Activated CD4-positive, alpha-beta T cell treated with anti-CD3 and anti-CD28 coated beads, Interleukin-2, amount 10 ng/mL, durations not matched to agents 24 days and 14 days (primary cell): ENCODE measurements at regions of chr9 and their contacts with region 1.

Region 1: DNA sequence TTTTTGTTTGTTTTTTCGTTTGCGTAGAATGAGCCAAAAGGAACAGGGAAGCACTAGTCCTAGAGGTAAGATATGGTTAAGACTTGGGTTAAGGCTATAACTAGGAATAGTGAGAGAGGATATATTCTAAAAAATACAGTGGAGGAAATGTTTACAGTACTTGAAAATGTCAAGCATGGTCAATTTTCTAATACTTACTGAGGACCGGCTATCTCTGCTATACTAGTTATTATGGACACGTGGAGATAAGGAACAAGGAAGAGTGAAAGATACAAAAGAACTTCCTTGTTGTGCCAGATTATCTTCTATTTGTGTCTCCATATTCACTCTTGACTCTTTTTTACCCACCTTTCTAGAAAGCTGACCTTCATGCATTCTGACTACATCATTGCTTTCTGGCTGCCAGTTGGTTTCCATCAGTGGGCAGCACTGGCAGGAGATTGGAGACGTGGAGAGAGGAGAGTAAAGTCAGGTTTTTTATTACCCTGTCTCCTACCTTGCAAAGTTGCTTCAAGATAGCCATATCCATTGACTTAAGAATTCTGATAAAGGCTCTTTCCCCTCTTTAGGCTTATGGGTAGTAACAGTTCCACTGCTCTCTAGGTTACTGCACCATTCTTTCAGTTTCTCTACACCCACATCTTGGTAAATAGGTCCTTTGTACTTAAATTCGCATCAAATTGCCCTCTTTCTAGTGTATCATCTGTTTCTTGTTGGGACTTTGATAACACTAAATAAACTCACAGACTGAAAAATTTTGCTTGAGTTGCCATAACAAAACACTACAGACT is 9.0 kb upstream of the RFX3 start:
- DNase-seq: no peak
- H3K4me3 Mint-ChIP-seq: no peak overlapping the region
- H3K27ac Mint-ChIP-seq: peak overlapping the region; percentile 8
- H3K4me1 Mint-ChIP-seq: peaks cover 20% of the 10 kb centered on the region
- H3K27me3 Mint-ChIP-seq: no peaks in the 10 kb centered on the region

Region 2: DNA sequence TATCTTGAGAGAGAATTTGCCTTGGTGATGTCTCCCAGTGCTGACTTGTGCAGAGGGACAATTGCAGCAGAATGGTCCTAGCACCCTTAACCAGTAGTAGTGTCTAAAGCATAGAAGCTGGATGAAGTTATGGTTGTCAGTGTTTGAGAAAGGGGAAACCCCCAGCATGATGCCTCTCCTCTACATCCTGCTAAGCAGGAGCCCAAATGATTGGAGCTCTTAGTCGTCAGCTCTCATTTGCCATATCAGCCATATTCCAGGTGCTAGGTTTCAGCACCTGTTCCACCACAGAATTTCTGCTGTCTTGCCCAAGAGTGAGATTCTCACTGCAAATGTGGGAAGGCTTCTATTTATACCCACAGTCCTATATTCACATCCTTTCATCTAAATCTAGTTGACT is 34.7 kb after region 1 on chr9:
- intact Hi-C with region 1: loop called (anchors 5 kb)
- DNase-seq: no peak
- H3K4me3 Mint-ChIP-seq: no peak overlapping the region
- H3K27ac Mint-ChIP-seq: no peak overlapping the region
- H3K4me1 Mint-ChIP-seq: peaks cover 2% of the 10 kb centered on the region
- H3K27me3 Mint-ChIP-seq: no peaks in the 10 kb centered on the region

Region 3: GRCh38 chr9:3687145-3687544 is 152.3 kb after region 1 on chr9:
- intact Hi-C with region 1: no loop called
- DNase-seq: no peak
- H3K4me3 Mint-ChIP-seq: no peak overlapping the region
- H3K27ac Mint-ChIP-seq: no peak overlapping the region
- H3K4me1 Mint-ChIP-seq: no peaks in the 10 kb centered on the region
- H3K27me3 Mint-ChIP-seq: no peaks in the 10 kb centered on the region